IMR-90 (cell line): ENCODE measurements at regions of chr17 and their contacts with region 1.

Region 1: DNA sequence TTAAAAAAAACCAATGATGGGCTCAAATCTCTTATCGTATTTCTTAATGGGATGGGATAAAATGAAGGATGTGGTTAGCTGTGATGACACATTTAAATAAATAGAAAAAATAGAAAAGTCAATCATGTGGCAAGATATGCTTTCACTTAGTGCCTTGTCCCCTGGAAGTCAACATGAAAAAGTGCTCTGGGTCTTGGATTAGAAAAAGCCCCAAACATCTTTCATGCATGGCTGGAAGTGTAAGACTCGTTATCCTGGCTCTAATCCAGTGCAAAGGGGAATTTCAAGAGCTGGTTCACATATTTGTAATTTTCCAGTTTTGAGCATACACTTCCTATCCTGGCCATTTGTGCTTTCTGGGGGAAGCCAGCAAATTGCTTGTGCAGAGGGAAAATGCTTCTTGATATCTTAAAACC is 160.9 kb downstream of the MAP2K6 start:
- DNase-seq: peak; percentile 87
- ATAC-seq: peak; percentile 47
- H3K4me3 ChIP-seq: no peak overlapping the region
- H3K27ac ChIP-seq: peak overlapping the region; percentile 26; the same call in 1 of the 2 replicates
- H3K4me1 ChIP-seq: peaks cover 13% of the 10 kb centered on the region
- H3K27me3 ChIP-seq: no peaks in the 10 kb centered on the region
- CTCF ChIP-seq: no peak
- POLR2A ChIP-seq: no peak
- RAD21 ChIP-seq: no peak

Region 2: GRCh38 chr17:69592692-69593350 is 17.5 kb after region 1 on chr17:
- CTCF ChIA-PET with region 1: interaction called, 4 read pairs
- POLR2A ChIA-PET with region 1: no interaction called
- dilution Hi-C with region 1: no loop called
- in situ Hi-C with region 1: no loop called
- intact Hi-C with region 1: loop called (anchors 1 kb)
- DNase-seq: peak; percentile 93
- ATAC-seq: peak; percentile 94
- H3K4me3 ChIP-seq: no peak overlapping the region
- H3K27ac ChIP-seq: peak overlapping the region; percentile 99
- H3K4me1 ChIP-seq: peaks cover 16% of the 10 kb centered on the region
- H3K27me3 ChIP-seq: no peaks in the 10 kb centered on the region
- CTCF ChIP-seq: no peak
- POLR2A ChIP-seq: no peak
- RAD21 ChIP-seq: no peak

Region 3: GRCh38 chr17:69654981-69655855 is 79.9 kb after region 1 on chr17:
- CTCF ChIA-PET with region 1: no interaction called
- POLR2A ChIA-PET with region 1: no interaction called
- dilution Hi-C with region 1: no loop called
- in situ Hi-C with region 1: no loop called
- intact Hi-C with region 1: loop called (anchors 10 kb)
- DNase-seq: peak; percentile 95
- ATAC-seq: peak; percentile 94
- H3K4me3 ChIP-seq: no peak overlapping the region
- H3K27ac ChIP-seq: peak overlapping the region; percentile 96
- H3K4me1 ChIP-seq: peaks cover 8% of the 10 kb centered on the region
- H3K27me3 ChIP-seq: peaks cover 19% of the 10 kb centered on the region
- CTCF ChIP-seq: no peak
- POLR2A ChIP-seq: no peak
- RAD21 ChIP-seq: no peak